ENCODE measurements at regions of chr2 and their contacts with region 1.

Region 1: DNA sequence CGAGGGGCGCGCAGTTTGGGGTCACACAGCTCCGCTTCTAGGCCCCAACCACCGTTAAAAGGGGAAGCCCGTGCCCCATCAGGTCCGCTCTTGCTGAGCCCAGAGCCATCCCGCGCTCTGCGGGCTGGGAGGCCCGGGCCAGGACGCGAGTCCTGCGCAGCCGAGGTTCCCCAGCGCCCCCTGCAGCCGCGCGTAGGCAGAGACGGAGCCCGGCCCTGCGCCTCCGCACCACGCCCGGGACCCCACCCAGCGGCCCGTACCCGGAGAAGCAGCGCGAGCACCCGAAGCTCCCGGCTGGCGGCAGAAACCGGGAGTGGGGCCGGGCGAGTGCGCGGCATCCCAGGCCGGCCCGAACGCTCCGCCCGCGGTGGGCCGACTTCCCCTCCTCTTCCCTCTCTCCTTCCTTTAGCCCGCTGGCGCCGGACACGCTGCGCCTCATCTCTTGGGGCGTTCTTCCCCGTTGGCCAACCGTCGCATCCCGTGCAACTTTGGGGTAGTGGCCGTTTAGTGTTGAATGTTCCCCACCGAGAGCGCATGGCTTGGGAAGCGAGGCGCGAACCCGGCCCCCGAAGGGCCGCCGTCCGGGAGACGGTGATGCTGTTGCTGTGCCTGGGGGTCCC is at the start of gene ITGA4:
- DNase-seq: peak; percentile 87
- H3K4me3 Mint-ChIP-seq: peak within 1 kb of the TSS; percentile 98
- H3K27ac Mint-ChIP-seq: peak within 1 kb of the TSS; percentile 96
- H3K4me1 Mint-ChIP-seq: peaks cover 58% of the 10 kb centered on the region
- H3K27me3 Mint-ChIP-seq: no peaks in the 10 kb centered on the region
- total RNA-seq, gene ITGA4: 96.5 and 106 TPM in 2 replicates

Region 2: DNA sequence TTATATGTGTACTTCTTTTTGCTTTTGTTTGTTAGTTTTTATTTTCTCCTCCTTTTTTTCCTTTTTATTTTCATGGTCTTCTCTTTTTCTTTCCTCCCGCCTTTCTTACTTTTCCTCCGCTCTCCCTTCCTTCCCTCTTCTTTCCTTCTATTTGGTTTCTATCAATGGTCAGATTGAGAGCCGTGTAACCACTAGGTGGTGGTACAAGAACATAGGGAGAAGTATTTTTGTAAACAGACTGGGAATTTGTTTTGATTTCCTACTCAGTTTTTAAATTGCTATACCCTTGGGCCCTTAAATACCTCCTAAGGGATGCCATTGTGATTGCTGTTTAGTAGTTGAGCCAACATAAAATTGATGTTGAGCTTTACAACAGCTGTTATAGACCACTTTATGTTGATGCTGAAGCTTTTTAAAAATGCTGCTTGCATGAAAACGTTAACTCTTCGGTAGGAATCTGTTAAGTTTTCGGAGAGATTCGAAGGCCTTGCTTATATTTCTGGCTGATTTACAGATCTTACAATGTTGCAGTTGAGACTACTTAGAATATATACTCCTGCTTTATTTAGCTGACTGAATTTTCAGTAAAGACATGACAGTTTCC is 352.6 kb before region 1 on chr2:
- intact Hi-C with region 1: loop called (anchors 1 kb)
- DNase-seq: no peak
- H3K4me3 Mint-ChIP-seq: no peak overlapping the region
- H3K27ac Mint-ChIP-seq: peak overlapping the region; percentile 34
- H3K4me1 Mint-ChIP-seq: peaks cover 51% of the 10 kb centered on the region
- H3K27me3 Mint-ChIP-seq: no peaks in the 10 kb centered on the region

Region 3: GRCh38 chr2:181178823-181179412 is 278.3 kb before region 1 on chr2:
- intact Hi-C with region 1: loop called (anchors 2 kb)
- DNase-seq: no peak
- H3K4me3 Mint-ChIP-seq: no peak overlapping the region
- H3K27ac Mint-ChIP-seq: peak overlapping the region; percentile 86
- H3K4me1 Mint-ChIP-seq: peaks cover 53% of the 10 kb centered on the region
- H3K27me3 Mint-ChIP-seq: no peaks in the 10 kb centered on the region

Region 4: DNA sequence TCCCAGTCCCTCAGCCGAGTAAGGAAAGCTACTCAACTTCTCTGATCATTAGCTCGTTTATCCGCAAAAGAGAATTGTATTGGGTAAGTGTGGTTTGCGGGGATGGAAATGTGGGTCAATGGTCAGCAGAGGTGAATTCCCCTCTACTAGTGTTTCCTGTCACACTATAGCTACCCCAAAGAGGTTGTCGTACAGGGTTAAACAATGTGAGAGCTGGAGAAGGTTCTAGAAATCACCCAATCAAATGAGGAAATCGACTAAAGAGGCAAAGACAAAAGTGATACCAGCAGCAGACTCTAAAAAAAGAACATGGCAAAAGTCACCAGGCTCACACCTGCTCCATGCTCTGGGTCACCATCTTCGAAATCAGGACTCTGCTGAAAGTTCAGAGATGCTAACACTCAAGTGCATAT is 144.7 kb before region 1 on chr2:
- intact Hi-C with region 1: loop called (anchors 1 kb)
- DNase-seq: peak; percentile 34
- H3K4me3 Mint-ChIP-seq: peak overlapping the region; percentile 82
- H3K27ac Mint-ChIP-seq: peak overlapping the region; percentile 98
- H3K4me1 Mint-ChIP-seq: peaks cover 62% of the 10 kb centered on the region
- H3K27me3 Mint-ChIP-seq: no peaks in the 10 kb centered on the region

Region 5: DNA sequence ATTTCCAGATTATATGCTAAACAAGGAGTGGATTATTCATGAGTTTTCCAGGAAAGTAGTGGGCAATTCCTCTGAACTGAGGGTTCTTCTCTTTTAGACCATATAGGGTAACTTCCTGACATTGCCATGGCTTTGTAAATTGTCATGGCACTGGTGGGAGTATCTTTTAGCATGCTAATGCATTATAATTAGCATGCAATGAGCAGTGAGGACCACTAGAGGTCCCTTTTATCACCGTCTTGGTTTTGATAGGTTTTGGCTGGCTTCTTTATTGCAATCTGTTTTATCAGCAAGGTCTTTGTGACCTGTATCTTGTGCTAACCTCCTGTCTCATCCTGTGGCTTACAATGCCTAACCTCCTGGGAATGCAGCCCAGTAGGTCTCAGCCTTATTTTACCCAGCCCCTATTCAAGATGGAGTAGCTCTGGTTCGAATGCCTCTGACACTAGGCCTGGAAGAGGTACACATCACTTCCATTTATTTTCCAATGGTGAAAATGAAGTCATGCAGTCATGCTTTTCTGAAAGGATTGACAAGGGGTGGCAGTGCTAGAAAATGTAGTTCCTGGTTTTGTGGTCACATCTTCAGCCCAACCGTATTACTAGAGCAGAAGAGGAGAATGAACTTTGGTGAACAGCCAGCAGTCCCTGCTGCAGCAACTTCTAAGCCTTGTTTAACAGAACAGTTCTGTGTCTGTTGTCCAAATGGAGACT is 26.7 kb before region 1 on chr2:
- intact Hi-C with region 1: loop called (anchors 2 kb)
- DNase-seq: no peak
- H3K4me3 Mint-ChIP-seq: no peak overlapping the region
- H3K27ac Mint-ChIP-seq: peak overlapping the region; percentile 6
- H3K4me1 Mint-ChIP-seq: peaks cover 28% of the 10 kb centered on the region
- H3K27me3 Mint-ChIP-seq: no peaks in the 10 kb centered on the region

Region 6: DNA sequence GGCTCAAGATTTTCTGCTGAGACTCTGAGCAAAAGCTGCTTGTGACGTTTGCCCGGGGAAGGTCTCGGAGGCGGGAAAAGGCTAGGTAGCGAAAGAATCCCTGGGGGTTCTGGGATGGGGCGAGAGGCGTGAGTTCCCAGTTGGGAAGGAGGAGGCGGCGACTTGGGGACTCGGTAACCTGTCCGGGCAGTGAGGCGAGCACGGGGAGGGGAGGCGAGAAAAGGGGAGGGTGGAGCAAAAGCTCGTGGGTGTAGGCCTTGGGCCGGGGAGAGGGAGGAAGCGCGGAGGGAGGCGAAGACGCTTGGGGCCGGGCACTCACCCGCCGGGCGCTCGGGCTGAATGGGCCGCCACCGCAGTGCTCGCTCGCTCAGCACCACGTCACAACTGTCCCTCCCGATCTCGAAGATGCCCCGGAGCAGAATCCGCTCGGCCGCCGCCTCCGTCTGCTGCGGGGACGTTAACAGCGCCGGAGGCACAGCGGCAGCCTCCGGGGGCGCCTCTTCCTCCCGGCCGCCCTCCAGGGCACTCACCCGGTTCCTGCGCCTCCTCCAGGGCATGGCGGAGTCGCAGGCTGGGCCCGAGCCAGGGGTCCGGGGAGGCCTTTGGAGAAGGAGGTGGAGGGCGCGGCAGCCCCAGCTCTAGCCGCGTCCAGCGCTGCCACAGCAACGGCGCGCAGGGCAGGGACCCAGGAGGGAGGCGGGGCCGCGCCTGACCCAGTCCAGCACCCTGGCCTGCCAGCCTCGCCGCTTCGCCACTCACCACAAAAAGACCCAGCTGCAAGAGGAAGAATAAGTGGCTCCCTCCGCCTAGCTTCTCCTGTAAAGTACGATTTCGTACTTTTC is 199.4 kb after region 1 on chr2 and contains the start of gene CERKL:
- intact Hi-C with region 1: no loop called
- DNase-seq: no peak
- H3K4me3 Mint-ChIP-seq: peak within 1 kb of the TSS; percentile 79
- H3K27ac Mint-ChIP-seq: no peak within 1 kb of the TSS
- H3K4me1 Mint-ChIP-seq: peaks cover 9% of the 10 kb centered on the region
- H3K27me3 Mint-ChIP-seq: peaks cover 65% of the 10 kb centered on the region
- total RNA-seq, gene CERKL: not detected in 2 replicates

Measured in activated T-helper 2 cell treated with anti-CD3 and anti-CD28 coated beads, Interferon-gamma antibody, Interleukin-2, Interleukin-4, amounts not matched to agents 10 μg/mL and 5 μg/mL and 100 μg/mL, durations not matched to agents 14 hours and 24 hours and 36 hours (primary cell).